Motor neuron (in vitro differentiated cells): ENCODE measurements at regions of chr1 and their contacts with region 1.

Region 1: GRCh38 chr1:77533660-77534305 is 148.7 kb downstream of the ZZZ3 start:
- ATAC-seq: peak; percentile 44 to 69 (median 56)
- H3K4me3 ChIP-seq: no peak overlapping the region
- H3K27ac ChIP-seq: no peak overlapping the region
- H3K4me1 ChIP-seq: no peaks in the 10 kb centered on the region

Region 2: GRCh38 chr1:77143529-77144121 is 390.2 kb before region 1 on chr1:
- in situ Hi-C with region 1: loop called in 2 of 9 experiments (anchors 10 kb)
- ATAC-seq: no peak
- H3K4me3 ChIP-seq: no peak overlapping the region
- H3K27ac ChIP-seq: no peak overlapping the region
- H3K4me1 ChIP-seq: no peaks in the 10 kb centered on the region

Region 3: DNA sequence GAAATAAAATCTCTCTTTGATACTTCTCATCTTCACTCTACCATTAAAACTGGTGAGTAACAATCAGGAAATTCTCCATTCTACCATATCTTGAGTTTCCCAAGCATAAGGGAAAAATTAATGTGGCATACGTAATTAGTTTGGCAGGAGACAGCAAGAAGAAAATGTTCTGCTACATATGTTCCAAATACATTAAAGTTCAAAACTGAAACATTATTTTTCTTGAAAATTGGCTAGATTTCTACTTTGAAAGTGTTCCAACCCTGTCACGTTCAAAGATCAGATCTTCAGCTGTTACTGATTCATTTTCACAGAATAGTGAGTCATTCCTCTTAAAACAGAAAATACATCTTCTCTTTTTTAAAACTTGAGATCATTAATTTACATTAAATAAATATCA is 363.1 kb before region 1 on chr1:
- in situ Hi-C with region 1: loop called in 4 of 9 experiments (anchors 10 to 25 kb)
- ATAC-seq: no peak
- H3K4me3 ChIP-seq: no peak overlapping the region
- H3K27ac ChIP-seq: no peak overlapping the region
- H3K4me1 ChIP-seq: no peaks in the 10 kb centered on the region